GM12878 (cell line): ENCODE measurements at regions of chrX and their contacts with region 1.

Region 1: GRCh38 chrX:3638280-3638873 is 75.1 kb downstream of the PRKX start:
- DNase-seq: peak; percentile 16
- ATAC-seq: peak; percentile 90
- H3K4me3 ChIP-seq: no peak overlapping the region
- H3K27ac ChIP-seq: no peak overlapping the region
- H3K4me1 ChIP-seq: no peaks in the 10 kb centered on the region
- H3K27me3 ChIP-seq: no peaks in the 10 kb centered on the region
- CTCF ChIP-seq: peak; percentile 60 to 73 (median 64)
- EP300 ChIP-seq: no peak
- POLR2A ChIP-seq: no peak
- RAD21 ChIP-seq: peak; percentile 82

Region 2: GRCh38 chrX:3026065-3026815 is 612.1 kb before region 1 on chrX:
- CTCF ChIA-PET with region 1: no interaction called
- POLR2A ChIA-PET with region 1: no interaction called
- RAD21 ChIA-PET with region 1: no interaction called
- SMC1A ChIA-PET with region 1: no interaction called
- in situ Hi-C with region 1: loop called (anchors 5 kb)
- intact Hi-C with region 1: no loop called
- DNase-seq: no peak
- ATAC-seq: no peak
- H3K4me3 ChIP-seq: no peak overlapping the region
- H3K27ac ChIP-seq: no peak overlapping the region
- H3K4me1 ChIP-seq: no peaks in the 10 kb centered on the region
- H3K27me3 ChIP-seq: no peaks in the 10 kb centered on the region
- CTCF ChIP-seq: no peak
- EP300 ChIP-seq: no peak
- POLR2A ChIP-seq: no peak
- RAD21 ChIP-seq: no peak

Region 3: GRCh38 chrX:3037218-3037617 is 601.2 kb before region 1 on chrX:
- CTCF ChIA-PET with region 1: interaction called, 3 read pairs
- POLR2A ChIA-PET with region 1: no interaction called
- RAD21 ChIA-PET with region 1: no interaction called
- SMC1A ChIA-PET with region 1: no interaction called
- in situ Hi-C with region 1: loop called (anchors 5 kb)
- intact Hi-C with region 1: loop called (anchors 1 kb)
- DNase-seq: no peak
- ATAC-seq: no peak
- H3K4me3 ChIP-seq: no peak overlapping the region
- H3K27ac ChIP-seq: no peak overlapping the region
- H3K4me1 ChIP-seq: no peaks in the 10 kb centered on the region
- H3K27me3 ChIP-seq: no peaks in the 10 kb centered on the region
- CTCF ChIP-seq: no peak
- EP300 ChIP-seq: no peak
- POLR2A ChIP-seq: no peak
- RAD21 ChIP-seq: no peak

Region 4: GRCh38 chrX:3119376-3119775 is 519.0 kb before region 1 on chrX:
- CTCF ChIA-PET with region 1: interaction called, 3 read pairs
- POLR2A ChIA-PET with region 1: no interaction called
- RAD21 ChIA-PET with region 1: no interaction called
- SMC1A ChIA-PET with region 1: no interaction called
- in situ Hi-C with region 1: no loop called
- intact Hi-C with region 1: loop called (anchors 5 kb)
- DNase-seq: no peak
- ATAC-seq: no peak
- H3K4me3 ChIP-seq: no peak overlapping the region
- H3K27ac ChIP-seq: no peak overlapping the region
- H3K4me1 ChIP-seq: no peaks in the 10 kb centered on the region
- H3K27me3 ChIP-seq: no peaks in the 10 kb centered on the region
- CTCF ChIP-seq: no peak
- EP300 ChIP-seq: no peak
- POLR2A ChIP-seq: no peak
- RAD21 ChIP-seq: no peak

Region 5: DNA sequence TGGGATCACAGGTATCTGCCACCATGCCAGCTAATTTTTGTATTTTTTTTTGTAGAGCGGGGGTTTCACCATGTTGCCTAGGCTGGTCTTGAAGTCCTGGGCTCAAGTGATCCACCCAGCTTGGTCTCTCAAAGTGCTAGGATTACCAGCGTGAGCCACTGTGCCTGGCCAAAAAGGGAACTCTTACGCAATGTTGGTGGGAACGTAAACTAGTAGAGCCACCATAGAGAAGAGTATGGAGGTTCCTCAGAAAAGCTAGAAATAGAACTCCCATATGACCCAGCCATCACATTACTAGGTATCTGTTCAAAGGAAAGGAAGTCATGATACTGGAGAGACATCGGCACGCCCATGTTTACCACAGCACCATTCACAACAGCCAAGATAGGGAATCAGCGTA is 10.8 kb before region 1 on chrX:
- CTCF ChIA-PET with region 1: no interaction called
- POLR2A ChIA-PET with region 1: no interaction called
- RAD21 ChIA-PET with region 1: no interaction called
- SMC1A ChIA-PET with region 1: no interaction called
- in situ Hi-C with region 1: no loop called
- intact Hi-C with region 1: no loop called
- DNase-seq: no peak
- ATAC-seq: no peak
- H3K4me3 ChIP-seq: no peak overlapping the region
- H3K27ac ChIP-seq: no peak overlapping the region
- H3K4me1 ChIP-seq: no peaks in the 10 kb centered on the region
- H3K27me3 ChIP-seq: no peaks in the 10 kb centered on the region
- CTCF ChIP-seq: no peak
- EP300 ChIP-seq: no peak
- POLR2A ChIP-seq: no peak
- RAD21 ChIP-seq: no peak